ENCODE measurements at regions of chr12 and their contacts with region 1.

Region 1: GRCh38 chr12:72264548-72265175 is 7.5 kb upstream of the TRHDE start:
- DNase-seq: no peak
- ATAC-seq: no peak
- H3K4me3 ChIP-seq: no peak overlapping the region
- H3K27ac ChIP-seq: no peak overlapping the region
- H3K4me1 ChIP-seq: no peaks in the 10 kb centered on the region
- H3K27me3 ChIP-seq: peaks cover 0 to 4% (median 2%) of the 10 kb centered on the region in 3 donors
- CTCF ChIP-seq: peak; percentile 37

Region 2: GRCh38 chr12:72296389-72296788 is 31.7 kb after region 1 on chr12:
- intact Hi-C with region 1: no loop called
- DNase-seq: no peak
- ATAC-seq: no peak
- H3K4me3 ChIP-seq: no peak overlapping the region
- H3K27ac ChIP-seq: no peak overlapping the region
- H3K4me1 ChIP-seq: no peaks in the 10 kb centered on the region
- H3K27me3 ChIP-seq: no peaks in the 10 kb centered on the region
- CTCF ChIP-seq: no peak

Region 3: DNA sequence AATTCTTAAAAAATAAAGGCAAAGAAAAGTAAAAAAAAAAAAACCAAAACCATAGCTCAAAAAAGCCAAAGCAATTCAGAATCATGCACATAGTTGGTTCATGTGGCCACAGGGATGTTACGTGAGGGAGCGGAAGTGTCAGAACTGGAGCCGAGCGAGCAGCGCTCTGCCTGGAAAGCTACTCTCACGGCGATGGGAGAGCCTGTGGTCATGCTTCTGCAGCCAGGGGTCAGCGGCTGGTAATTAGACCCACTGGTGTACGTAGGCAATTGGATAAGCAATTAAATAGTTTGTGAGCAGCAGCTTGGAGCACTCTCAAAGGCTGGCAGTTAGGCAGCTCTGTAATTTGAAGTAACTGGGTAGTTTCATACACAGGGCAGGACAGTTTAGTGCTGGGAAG is 65.6 kb after region 1 on chr12:
- intact Hi-C with region 1: loop called in 1 of 2 experiments (anchors 5 kb)
- DNase-seq: peak; percentile 11 to 51
- ATAC-seq: peak in 3 of 4 donors; percentile 82 to 89 (median 87)
- H3K4me3 ChIP-seq: peak overlapping the region; percentile 48
- H3K27ac ChIP-seq: peak overlapping the region; percentile 59
- H3K4me1 ChIP-seq: peaks cover 7% of the 10 kb centered on the region
- H3K27me3 ChIP-seq: no peaks in the 10 kb centered on the region
- CTCF ChIP-seq: no peak